MCF 10A (cell line): ENCODE measurements at regions of chr9 and their contacts with region 1.

Region 1: DNA sequence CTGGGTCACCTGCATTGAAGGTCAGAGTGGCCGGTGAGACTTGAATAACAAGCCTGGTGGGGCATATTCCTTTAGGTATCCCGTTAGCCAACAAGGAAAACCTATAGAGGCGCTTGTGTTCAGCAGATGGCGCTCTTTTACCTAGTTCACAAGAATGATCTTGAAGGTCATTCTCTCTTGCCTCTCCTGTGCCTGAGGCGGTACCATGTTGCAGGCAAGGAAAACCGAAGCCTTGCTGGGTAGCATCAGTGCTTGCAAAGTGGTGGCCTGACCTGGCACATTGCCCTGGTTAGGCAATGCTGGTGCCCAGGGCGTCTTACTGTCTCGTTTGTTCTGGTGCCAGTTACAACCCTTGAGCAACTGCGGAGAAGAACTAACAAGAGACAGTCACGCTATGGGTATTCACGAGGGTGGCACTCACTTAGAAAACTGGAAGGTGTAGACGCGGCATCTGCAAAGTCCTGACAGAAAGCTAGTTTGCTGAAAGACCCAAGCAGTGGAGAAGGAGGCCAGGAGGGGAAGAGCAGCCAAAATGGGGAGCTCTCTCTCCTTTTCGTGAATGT is 56.7 kb downstream of the AOPEP start:
- DNase-seq: peak; percentile 100
- H3K4me3 Mint-ChIP-seq: no peak overlapping the region
- H3K27ac Mint-ChIP-seq: no peak overlapping the region
- H3K4me1 Mint-ChIP-seq: peaks cover 23% of the 10 kb centered on the region
- H3K27me3 Mint-ChIP-seq: no peaks in the 10 kb centered on the region
- CTCF ChIP-seq: peak; percentile 70

Region 2: DNA sequence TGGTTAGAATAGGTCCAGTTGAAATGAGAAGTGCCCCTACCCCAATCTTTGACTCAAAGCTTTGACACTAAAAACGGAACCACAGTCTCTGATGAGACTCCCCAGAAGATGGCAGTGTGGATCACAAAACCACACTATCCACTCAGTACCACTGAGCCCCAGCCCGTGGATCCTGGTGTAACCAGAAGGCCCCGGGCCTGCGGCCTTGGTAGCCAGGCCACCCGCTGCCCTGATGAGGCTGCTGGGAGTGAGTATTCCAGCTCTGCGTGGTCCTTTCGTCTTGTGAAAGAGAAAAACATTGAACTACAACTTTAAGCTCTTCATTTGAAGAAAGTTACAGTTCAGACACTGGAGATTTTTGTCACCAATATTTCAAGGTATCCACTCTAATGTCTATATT is 101.7 kb before region 1 on chr9:
- CTCF ChIA-PET with region 1: interaction called, 6 read pairs
- POLR2A ChIA-PET with region 1: interaction called, 3 read pairs
- intact Hi-C with region 1: loop called (anchors 1 kb)
- DNase-seq: peak; percentile 76
- H3K4me3 Mint-ChIP-seq: no peak overlapping the region
- H3K27ac Mint-ChIP-seq: no peak overlapping the region
- H3K4me1 Mint-ChIP-seq: no peaks in the 10 kb centered on the region
- H3K27me3 Mint-ChIP-seq: no peaks in the 10 kb centered on the region
- CTCF ChIP-seq: peak; percentile 81

Region 3: GRCh38 chr9:94867281-94867841 is 84.2 kb after region 1 on chr9:
- CTCF ChIA-PET with region 1: interaction called, 3 read pairs
- POLR2A ChIA-PET with region 1: interaction called, 20 read pairs
- intact Hi-C with region 1: loop called (anchors 5 kb)
- DNase-seq: peak; percentile 82
- H3K4me3 Mint-ChIP-seq: peak overlapping the region; percentile 31
- H3K27ac Mint-ChIP-seq: peak overlapping the region; percentile 89
- H3K4me1 Mint-ChIP-seq: peaks cover 44% of the 10 kb centered on the region
- H3K27me3 Mint-ChIP-seq: no peaks in the 10 kb centered on the region
- CTCF ChIP-seq: no peak

Region 4: GRCh38 chr9:94945197-94946144 is 162.3 kb after region 1 on chr9:
- CTCF ChIA-PET with region 1: interaction called, 4 read pairs
- POLR2A ChIA-PET with region 1: interaction called, 16 read pairs
- intact Hi-C with region 1: no loop called
- DNase-seq: peak; percentile 82
- H3K4me3 Mint-ChIP-seq: peak overlapping the region; percentile 33
- H3K27ac Mint-ChIP-seq: peak overlapping the region; percentile 86
- H3K4me1 Mint-ChIP-seq: peaks cover 56% of the 10 kb centered on the region
- H3K27me3 Mint-ChIP-seq: no peaks in the 10 kb centered on the region
- CTCF ChIP-seq: no peak

Region 5: GRCh38 chr9:95018099-95018936 is 235.1 kb after region 1 on chr9:
- CTCF ChIA-PET with region 1: interaction called, 11 read pairs
- POLR2A ChIA-PET with region 1: interaction called, 34 read pairs
- intact Hi-C with region 1: loop called (anchors 1 kb)
- DNase-seq: peak; percentile 97
- H3K4me3 Mint-ChIP-seq: peak overlapping the region; percentile 31
- H3K27ac Mint-ChIP-seq: peak overlapping the region; percentile 94
- H3K4me1 Mint-ChIP-seq: peaks cover 41% of the 10 kb centered on the region
- H3K27me3 Mint-ChIP-seq: no peaks in the 10 kb centered on the region
- CTCF ChIP-seq: no peak

Region 6: GRCh38 chr9:95116003-95116807 is 333.0 kb after region 1 on chr9:
- CTCF ChIA-PET with region 1: interaction called, 6 read pairs
- POLR2A ChIA-PET with region 1: interaction called, 3 read pairs
- intact Hi-C with region 1: loop called (anchors 2 kb)
- DNase-seq: peak; percentile 66
- H3K4me3 Mint-ChIP-seq: no peak overlapping the region
- H3K27ac Mint-ChIP-seq: peak overlapping the region; percentile 6
- H3K4me1 Mint-ChIP-seq: peaks cover 12% of the 10 kb centered on the region
- H3K27me3 Mint-ChIP-seq: no peaks in the 10 kb centered on the region
- CTCF ChIP-seq: peak; percentile 33

Region 7: GRCh38 chr9:95327239-95327865 is 544.2 kb after region 1 on chr9:
- CTCF ChIA-PET with region 1: no interaction called
- POLR2A ChIA-PET with region 1: no interaction called
- intact Hi-C with region 1: no loop called
- DNase-seq: peak; percentile 5
- H3K4me3 Mint-ChIP-seq: no peak overlapping the region
- H3K27ac Mint-ChIP-seq: no peak overlapping the region
- H3K4me1 Mint-ChIP-seq: no peaks in the 10 kb centered on the region
- H3K27me3 Mint-ChIP-seq: no peaks in the 10 kb centered on the region
- CTCF ChIP-seq: no peak